HepG2 (cell line): ENCODE measurements at regions of chr11 and their contacts with region 1.

Region 1: DNA sequence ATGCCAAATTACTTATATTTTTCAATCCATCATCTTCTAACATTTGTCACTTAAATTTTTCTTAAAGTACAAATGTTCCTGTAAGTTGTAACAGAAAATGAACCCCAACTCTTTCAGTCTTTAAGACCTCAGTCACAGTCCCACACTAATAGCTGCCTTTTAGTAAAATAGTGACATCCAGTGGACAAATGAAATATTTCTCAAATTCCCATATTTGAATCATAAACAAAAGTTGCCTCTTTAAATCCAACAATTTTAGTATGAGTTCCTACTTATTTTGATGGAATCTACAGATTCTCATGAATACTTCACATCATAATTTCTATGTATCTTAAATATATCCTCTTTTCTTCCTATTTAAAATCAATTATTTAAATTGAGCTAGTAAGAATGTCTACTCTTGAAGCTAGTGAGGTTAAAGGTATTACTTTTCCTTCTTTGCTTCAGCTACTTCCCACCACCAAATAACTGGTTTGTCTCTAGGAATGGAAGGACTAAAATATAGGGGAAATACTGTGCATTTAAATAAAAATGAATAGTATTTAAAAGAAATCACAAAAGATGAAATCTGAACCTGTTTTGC is 9.2 kb downstream of the LIN7C start:
- DNase-seq: peak; percentile 18
- ATAC-seq: peak; percentile 38; the same call in 1 of the 3 replicates
- H3K4me3 ChIP-seq: no peak overlapping the region
- H3K27ac ChIP-seq: no peak overlapping the region
- H3K4me1 ChIP-seq: peaks cover 4% of the 10 kb centered on the region; the same call in 1 of the 2 replicates
- H3K27me3 ChIP-seq: no peaks in the 10 kb centered on the region
- CTCF ChIP-seq: peak; percentile 55
- EP300 ChIP-seq: no peak
- POLR2A ChIP-seq: no peak
- RAD21 ChIP-seq: no peak

Region 2: DNA sequence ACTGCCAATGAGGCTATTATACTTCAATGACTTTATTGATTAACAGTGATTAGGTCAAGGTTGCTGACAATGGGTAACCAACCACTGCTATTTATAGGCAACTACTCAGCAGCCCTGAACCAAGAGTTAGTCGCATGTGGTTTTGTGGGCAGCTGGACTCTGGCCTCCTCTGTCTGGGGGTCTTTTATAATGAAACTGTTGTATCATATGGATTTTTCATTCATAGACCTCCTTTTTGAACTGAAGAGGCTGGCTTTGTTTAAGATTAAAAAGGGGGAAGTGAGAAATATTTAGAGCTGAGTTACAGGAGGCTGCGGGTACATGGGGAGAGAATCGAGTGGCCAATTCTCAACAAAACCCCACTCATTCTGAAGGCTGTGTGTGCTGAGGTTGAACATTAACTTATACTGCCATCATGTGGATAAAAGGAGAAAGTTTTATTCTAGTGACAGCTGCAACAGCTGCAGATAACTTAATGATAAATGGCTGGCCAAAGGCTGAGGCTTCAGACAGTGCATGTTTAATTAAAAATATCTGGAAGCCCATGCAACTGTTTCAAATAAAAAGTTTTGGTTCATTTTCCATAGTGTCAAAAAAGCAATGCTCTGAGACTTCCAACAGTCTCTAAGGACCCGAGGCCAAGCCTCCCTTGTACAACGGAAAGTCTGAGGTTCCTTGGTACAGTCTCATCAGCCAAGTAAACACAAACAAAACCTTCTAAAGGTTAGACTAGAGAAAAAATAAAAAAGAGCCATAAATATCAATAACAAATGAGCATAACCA is 1836.8 kb after region 1 on chr11:
- CTCF ChIA-PET with region 1: no interaction called
- POLR2A ChIA-PET with region 1: no interaction called
- in situ Hi-C with region 1: no loop called
- intact Hi-C with region 1: loop called (anchors 5 kb)
- DNase-seq: peak; percentile 32
- ATAC-seq: peak; percentile 91
- H3K4me3 ChIP-seq: no peak overlapping the region
- H3K27ac ChIP-seq: no peak overlapping the region
- H3K4me1 ChIP-seq: no peaks in the 10 kb centered on the region; the same call in 1 of the 2 replicates
- H3K27me3 ChIP-seq: peaks cover 0 to 1% of the 10 kb centered on the region in 2 experiments; a peak in 1 of 5 replicates
- CTCF ChIP-seq: peak; percentile 69
- EP300 ChIP-seq: no peak
- POLR2A ChIP-seq: no peak
- RAD21 ChIP-seq: peak; percentile 54